BJ (cell line): ENCODE measurements at regions of chr16 and their contacts with region 1.

Region 1: GRCh38 chr16:2288726-2289125 is 20.8 kb upstream of the RNPS1 start:
- DNase-seq: no peak
- H3K4me3 ChIP-seq: no peak overlapping the region
- H3K27me3 ChIP-seq: no peaks in the 10 kb centered on the region
- CTCF ChIP-seq: no peak

Region 2: DNA sequence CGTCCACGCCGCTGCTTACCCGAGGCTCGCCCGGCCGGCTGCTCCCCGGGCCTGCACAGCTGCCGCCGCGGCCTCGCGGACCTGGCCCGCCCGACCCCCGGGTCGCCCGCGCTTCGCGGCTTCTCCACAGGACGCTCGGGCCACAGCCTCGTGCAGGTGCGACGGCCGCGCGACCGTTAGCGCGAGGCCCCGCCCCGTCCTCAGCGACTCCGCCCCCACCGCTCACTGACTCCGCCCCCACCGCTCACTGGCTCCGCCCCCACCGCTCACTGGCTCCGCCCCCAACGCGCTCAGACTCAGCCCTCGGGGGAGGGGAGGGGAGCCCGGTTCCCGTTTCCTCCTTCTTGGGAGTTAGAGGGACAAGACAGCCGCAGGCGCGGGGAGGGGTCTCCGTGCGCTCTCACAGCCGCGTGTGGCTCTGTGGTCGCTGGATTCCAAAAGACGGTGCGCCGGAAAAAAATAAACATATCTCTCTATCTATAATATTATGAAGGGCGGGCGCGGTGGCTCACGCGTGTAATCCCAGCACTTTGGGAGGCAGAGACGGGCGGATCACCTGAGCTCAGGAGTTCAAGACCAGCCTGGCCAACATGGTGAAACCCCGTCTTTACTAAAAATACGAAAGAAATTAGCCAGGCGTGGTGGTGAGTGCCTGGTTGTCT is 416.6 kb before region 1 on chr16 and contains the start of gene MEIOB:
- CTCF ChIA-PET with region 1: no interaction called
- POLR2A ChIA-PET with region 1: interaction called, 19 read pairs
- DNase-seq: no peak
- H3K4me3 ChIP-seq: peak within 1 kb of the TSS; percentile 18
- H3K27me3 ChIP-seq: peaks cover 2% of the 10 kb centered on the region; the same call in 1 of the 2 replicates
- CTCF ChIP-seq: no peak
- polyA plus RNA-seq, gene MEIOB: 0.25 and 0.28 TPM in 2 replicates

Region 3: DNA sequence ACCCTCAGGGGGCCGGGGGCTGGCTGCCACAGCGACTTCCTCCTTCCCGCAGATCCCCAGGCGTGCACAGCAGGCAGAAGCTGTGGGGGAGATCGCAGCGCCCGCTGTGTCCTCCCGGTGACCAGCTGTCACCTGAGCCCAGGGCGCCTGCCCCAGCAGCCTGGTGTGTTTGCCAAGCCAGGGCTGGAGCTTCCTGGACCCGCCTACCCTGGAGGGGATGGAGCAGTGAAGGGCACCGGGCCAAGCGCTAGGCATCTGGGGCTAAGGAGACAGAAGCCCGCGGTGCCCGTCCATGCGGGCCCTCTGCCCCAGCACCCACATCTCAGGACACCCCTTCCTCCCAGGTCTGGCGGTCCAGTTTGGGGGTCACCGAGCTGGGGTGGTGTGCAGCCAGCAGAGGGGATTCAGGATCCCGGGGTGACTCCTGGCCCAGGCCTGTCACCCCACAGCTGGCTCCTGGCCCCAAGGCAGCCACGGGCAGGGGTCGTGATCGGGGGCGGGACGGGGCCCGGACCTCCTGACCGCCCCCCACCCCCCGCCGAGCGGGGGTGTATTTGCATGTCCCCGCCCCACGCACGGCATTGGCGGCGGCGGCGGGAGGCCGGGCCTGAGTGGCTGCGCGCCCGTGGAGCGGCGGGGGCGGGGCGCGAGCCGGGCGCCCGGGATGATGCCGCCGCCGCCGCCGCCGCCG is 140.6 kb before region 1 on chr16 and contains the start of gene RAB26:
- CTCF ChIA-PET with region 1: no interaction called
- POLR2A ChIA-PET with region 1: no interaction called
- DNase-seq: no peak
- H3K4me3 ChIP-seq: peak within 1 kb of the TSS; percentile 38
- H3K27me3 ChIP-seq: no peaks in the 10 kb centered on the region
- CTCF ChIP-seq: no peak
- polyA plus RNA-seq, gene RAB26: 0.36 and 0.67 TPM in 2 replicates